Mammary epithelial cell (primary cell): ENCODE measurements at regions of chr12 and their contacts with region 1.

Region 1: GRCh38 chr12:51238510-51239334 is at the start of gene DAZAP2:
- DNase-seq: peak; percentile 93
- H3K4me3 ChIP-seq: peak within 1 kb of the TSS; percentile 88 to 100 (median 98)
- H3K27ac ChIP-seq: peak within 1 kb of the TSS; percentile 98
- H3K4me1 ChIP-seq: peaks cover 21% of the 10 kb centered on the region
- H3K27me3 ChIP-seq: no peaks in the 10 kb centered on the region
- CTCF ChIP-seq: peak; percentile 7 to 41
- total RNA-seq, gene DAZAP2: 90.7 to 138 TPM

Region 2: GRCh38 chr12:51025836-51026638 is 212.7 kb before region 1 on chr12 and contains the start of gene SLC11A2:
- CTCF ChIA-PET with region 1: no interaction called
- dilution Hi-C with region 1: no loop called
- in situ Hi-C with region 1: no loop called
- intact Hi-C with region 1: loop called (anchors 5 kb)
- DNase-seq: peak; percentile 95
- H3K4me3 ChIP-seq: peak within 1 kb of the TSS; percentile 73 to 87 (median 82)
- H3K27ac ChIP-seq: peak within 1 kb of the TSS; percentile 98
- H3K4me1 ChIP-seq: peaks cover 39% of the 10 kb centered on the region
- H3K27me3 ChIP-seq: no peaks in the 10 kb centered on the region
- CTCF ChIP-seq: no peak
- total RNA-seq, gene SLC11A2: 42.5 to 56.3 TPM

Region 3: GRCh38 chr12:51070004-51070403 is 168.7 kb before region 1 on chr12:
- CTCF ChIA-PET with region 1: no interaction called
- dilution Hi-C with region 1: loop called (anchors 25 kb)
- in situ Hi-C with region 1: no loop called
- intact Hi-C with region 1: no loop called
- DNase-seq: peak; percentile 83
- H3K4me3 ChIP-seq: no peak overlapping the region
- H3K27ac ChIP-seq: no peak overlapping the region
- H3K4me1 ChIP-seq: peaks cover 6% of the 10 kb centered on the region
- H3K27me3 ChIP-seq: no peaks in the 10 kb centered on the region
- CTCF ChIP-seq: no peak

Region 4: GRCh38 chr12:51118706-51119105 is 120.0 kb before region 1 on chr12:
- CTCF ChIA-PET with region 1: no interaction called
- dilution Hi-C with region 1: no loop called
- in situ Hi-C with region 1: no loop called
- intact Hi-C with region 1: loop called (anchors 5 kb)
- DNase-seq: peak; percentile 97
- H3K4me3 ChIP-seq: no peak overlapping the region
- H3K27ac ChIP-seq: peak overlapping the region; percentile 40
- H3K4me1 ChIP-seq: peaks cover 13% of the 10 kb centered on the region
- H3K27me3 ChIP-seq: no peaks in the 10 kb centered on the region
- CTCF ChIP-seq: no peak

Region 5: GRCh38 chr12:51217968-51218606 is 20.6 kb before region 1 on chr12 and contains the start of gene POU6F1:
- CTCF ChIA-PET with region 1: no interaction called
- dilution Hi-C with region 1: no loop called
- in situ Hi-C with region 1: no loop called
- intact Hi-C with region 1: loop called (anchors 2 kb)
- DNase-seq: peak; percentile 61
- H3K4me3 ChIP-seq: peak within 1 kb of the TSS; percentile 55 to 86 (median 66)
- H3K27ac ChIP-seq: peak within 1 kb of the TSS; percentile 25
- H3K4me1 ChIP-seq: peaks cover 10% of the 10 kb centered on the region
- H3K27me3 ChIP-seq: no peaks in the 10 kb centered on the region
- CTCF ChIP-seq: peak; percentile 33 to 64
- total RNA-seq, gene POU6F1: 2.6 to 3.5 TPM

Region 6: DNA sequence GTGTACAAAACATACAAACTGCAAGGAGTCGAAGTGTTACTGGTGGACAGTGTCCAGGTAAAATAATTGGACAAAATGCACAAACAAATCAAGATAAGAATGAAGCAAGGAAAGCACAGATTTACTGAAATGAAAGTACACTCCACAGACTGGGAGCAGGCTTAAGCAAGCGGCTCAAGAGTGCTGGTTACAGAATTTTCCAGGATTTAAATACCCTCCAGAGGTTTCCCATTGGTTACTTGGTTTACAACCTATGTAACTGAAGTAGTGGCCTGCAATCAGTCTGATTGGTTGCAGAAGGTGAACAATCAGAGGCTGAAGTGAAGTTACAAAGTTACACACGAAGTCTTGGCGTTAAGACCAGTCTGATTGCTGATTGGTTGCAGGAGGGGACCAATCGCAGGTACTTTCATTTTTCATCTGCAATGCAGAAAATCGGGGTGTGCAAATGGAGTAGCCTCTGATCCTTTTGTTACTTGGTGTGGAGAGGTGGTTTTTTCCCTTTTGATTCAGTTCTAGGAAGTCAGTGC is 340.7 kb after region 1 on chr12:
- CTCF ChIA-PET with region 1: no interaction called
- dilution Hi-C with region 1: no loop called
- in situ Hi-C with region 1: no loop called
- intact Hi-C with region 1: no loop called
- DNase-seq: no peak
- H3K4me3 ChIP-seq: no peak overlapping the region
- H3K27ac ChIP-seq: no peak overlapping the region
- H3K4me1 ChIP-seq: no peaks in the 10 kb centered on the region
- H3K27me3 ChIP-seq: no peaks in the 10 kb centered on the region
- CTCF ChIP-seq: no peak